ENCODE measurements at regions of chr9 and their contacts with region 1.

Region 1: GRCh38 chr9:72038890-72039410 is 21.5 kb downstream of the C9orf57 start:
- DNase-seq: peak; percentile 70 to 83 (median 71)
- ATAC-seq: peak; percentile 64 to 82 (median 68)
- H3K4me3 ChIP-seq: no peak overlapping the region
- H3K27ac ChIP-seq: no peak overlapping the region
- H3K4me1 ChIP-seq: peaks cover 0 to 25% (median 14%) of the 10 kb centered on the region in 4 donors
- H3K27me3 ChIP-seq: no peaks in the 10 kb centered on the region
- CTCF ChIP-seq: peak; percentile 94 to 98 (median 94)
- POLR2A ChIP-seq: no peak

Region 2: GRCh38 chr9:72169178-72169577 is 130.2 kb after region 1 on chr9:
- intact Hi-C with region 1: no loop called
- DNase-seq: no peak
- ATAC-seq: peak; percentile 57 to 81 (median 74)
- H3K4me3 ChIP-seq: no peak overlapping the region
- H3K27ac ChIP-seq: peak overlapping the region in 2 of 3 donors; percentile 42 to 53
- H3K4me1 ChIP-seq: peaks cover 0 to 37% (median 6%) of the 10 kb centered on the region in 4 donors
- H3K27me3 ChIP-seq: no peaks in the 10 kb centered on the region
- CTCF ChIP-seq: no peak
- POLR2A ChIP-seq: no peak

Region 3: GRCh38 chr9:72271613-72272478 is 232.9 kb after region 1 on chr9:
- intact Hi-C with region 1: loop called in 1 of 2 experiments (anchors 5 kb)
- DNase-seq: peak in 1 of 3 donors; percentile 57
- ATAC-seq: peak; percentile 89 to 92 (median 92)
- H3K4me3 ChIP-seq: no peak overlapping the region
- H3K27ac ChIP-seq: no peak overlapping the region
- H3K4me1 ChIP-seq: peaks cover 0 to 5% (median 0%) of the 10 kb centered on the region in 4 donors
- H3K27me3 ChIP-seq: no peaks in the 10 kb centered on the region
- CTCF ChIP-seq: peak; percentile 84 to 92 (median 88)
- POLR2A ChIP-seq: no peak